ENCODE measurements at regions of chr20 and their contacts with region 1.

Region 1: GRCh38 chr20:62616728-62617621 is 25.3 kb upstream of the SLCO4A1 start:
- DNase-seq: peak; percentile 73
- ATAC-seq: peak; percentile 61
- H3K4me3 Mint-ChIP-seq: peak overlapping the region; percentile 73
- H3K27ac Mint-ChIP-seq: peak overlapping the region; percentile 93
- H3K4me1 Mint-ChIP-seq: peaks cover 45% of the 10 kb centered on the region
- H3K27me3 Mint-ChIP-seq: no peaks in the 10 kb centered on the region
- CTCF ChIP-seq: peak; percentile 84

Region 2: DNA sequence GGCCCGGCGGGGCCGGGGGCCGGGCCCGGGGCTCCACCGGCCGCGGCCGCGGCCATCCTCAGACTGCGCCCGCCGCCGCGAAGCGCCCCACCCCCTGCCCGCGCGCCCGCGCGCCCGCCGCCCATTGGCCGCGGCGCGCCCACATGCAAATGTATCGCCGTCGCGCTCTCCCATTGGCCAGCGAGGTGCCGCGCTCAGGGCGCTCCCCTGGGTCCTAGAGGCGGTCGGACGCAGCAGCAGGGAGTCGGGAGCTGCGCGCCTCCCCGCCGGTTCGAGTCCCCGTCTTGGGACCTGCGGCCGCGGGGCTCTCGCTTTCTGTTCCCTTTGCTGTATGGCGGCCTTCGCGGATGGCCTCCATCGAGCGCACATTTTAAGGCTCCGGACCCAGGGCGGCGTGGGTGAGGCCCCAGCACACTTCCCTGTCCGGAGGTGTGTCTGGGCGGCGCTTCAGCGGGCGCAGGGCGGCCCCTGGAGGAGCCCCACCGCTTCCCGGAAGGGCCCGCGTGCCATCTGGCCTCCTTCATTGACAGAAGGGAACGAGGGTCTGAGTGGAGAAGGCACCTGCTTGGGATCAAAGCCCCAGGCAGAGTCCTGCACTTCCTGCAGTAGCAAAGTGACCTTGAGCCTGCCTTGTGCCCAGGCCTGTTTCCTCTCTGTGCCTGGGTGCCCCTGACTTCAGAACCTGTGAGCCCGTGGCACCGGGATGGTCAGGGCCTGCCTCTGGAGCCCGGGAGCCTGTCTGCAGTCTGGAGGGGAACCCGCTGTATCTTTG is 209.6 kb before region 1 on chr20 and contains the start of gene CABLES2:
- CTCF ChIA-PET with region 1: interaction called, 11 read pairs
- POLR2A ChIA-PET with region 1: no interaction called
- intact Hi-C with region 1: loop called (anchors 2 kb)
- DNase-seq: peak; percentile 90
- ATAC-seq: peak; percentile 90
- H3K4me3 Mint-ChIP-seq: peak within 1 kb of the TSS; percentile 88
- H3K27ac Mint-ChIP-seq: peak within 1 kb of the TSS; percentile 86
- H3K4me1 Mint-ChIP-seq: peaks cover 36% of the 10 kb centered on the region
- H3K27me3 Mint-ChIP-seq: no peaks in the 10 kb centered on the region
- CTCF ChIP-seq: no peak
- total RNA-seq, gene CABLES2: 6.6 and 7.0 TPM in 2 replicates

Region 3: DNA sequence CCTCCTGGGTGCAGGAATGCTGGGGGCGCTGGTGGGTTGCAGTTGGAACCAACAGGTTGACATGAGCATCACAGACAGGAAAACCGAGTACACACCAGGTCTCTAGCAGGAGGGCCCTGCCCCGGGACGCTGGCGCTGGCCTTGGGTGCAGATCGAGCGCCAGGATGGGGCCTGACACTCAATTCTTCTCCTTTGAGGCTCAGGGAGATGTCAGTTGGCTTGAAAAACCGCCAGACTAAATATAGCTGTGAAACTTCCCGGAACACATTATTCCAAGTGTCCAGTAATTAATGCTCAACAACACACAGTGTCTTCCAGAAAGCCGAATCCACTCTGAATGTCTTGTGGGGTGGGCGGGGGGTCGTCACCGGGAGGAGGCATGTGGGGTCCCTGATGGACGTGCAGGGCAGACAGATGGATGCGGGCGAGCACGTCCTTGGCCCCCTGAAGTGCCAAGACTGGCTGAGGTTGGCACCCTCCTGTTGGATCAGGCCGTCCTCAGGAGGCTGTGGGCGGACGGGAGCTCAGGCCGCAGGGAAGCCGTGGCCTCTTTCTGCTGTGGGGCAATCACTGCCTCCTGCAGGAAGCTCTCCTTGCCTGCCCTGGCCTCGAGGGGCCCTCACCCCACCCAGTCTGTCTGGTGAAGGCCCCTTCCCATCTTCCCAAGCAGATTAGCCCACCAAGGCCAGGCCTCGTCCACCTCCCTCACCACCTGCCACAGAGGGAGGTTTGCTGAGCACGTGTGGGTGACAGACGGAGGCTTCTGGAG is 121.8 kb before region 1 on chr20:
- CTCF ChIA-PET with region 1: interaction called, 42 read pairs
- POLR2A ChIA-PET with region 1: interaction called, 11 read pairs
- intact Hi-C with region 1: loop called (anchors 1 kb)
- DNase-seq: no peak
- ATAC-seq: no peak
- H3K4me3 Mint-ChIP-seq: peak overlapping the region; percentile 44
- H3K27ac Mint-ChIP-seq: peak overlapping the region; percentile 59
- H3K4me1 Mint-ChIP-seq: peaks cover 24% of the 10 kb centered on the region
- H3K27me3 Mint-ChIP-seq: peaks cover 9% of the 10 kb centered on the region
- CTCF ChIP-seq: no peak

Region 4: GRCh38 chr20:62500237-62500864 is 116.6 kb before region 1 on chr20:
- CTCF ChIA-PET with region 1: interaction called, 42 read pairs
- POLR2A ChIA-PET with region 1: interaction called, 11 read pairs
- intact Hi-C with region 1: loop called (anchors 1 kb)
- DNase-seq: peak; percentile 77
- ATAC-seq: peak; percentile 49
- H3K4me3 Mint-ChIP-seq: no peak overlapping the region
- H3K27ac Mint-ChIP-seq: peak overlapping the region; percentile 67
- H3K4me1 Mint-ChIP-seq: peaks cover 42% of the 10 kb centered on the region
- H3K27me3 Mint-ChIP-seq: no peaks in the 10 kb centered on the region
- CTCF ChIP-seq: peak; percentile 33

Region 5: DNA sequence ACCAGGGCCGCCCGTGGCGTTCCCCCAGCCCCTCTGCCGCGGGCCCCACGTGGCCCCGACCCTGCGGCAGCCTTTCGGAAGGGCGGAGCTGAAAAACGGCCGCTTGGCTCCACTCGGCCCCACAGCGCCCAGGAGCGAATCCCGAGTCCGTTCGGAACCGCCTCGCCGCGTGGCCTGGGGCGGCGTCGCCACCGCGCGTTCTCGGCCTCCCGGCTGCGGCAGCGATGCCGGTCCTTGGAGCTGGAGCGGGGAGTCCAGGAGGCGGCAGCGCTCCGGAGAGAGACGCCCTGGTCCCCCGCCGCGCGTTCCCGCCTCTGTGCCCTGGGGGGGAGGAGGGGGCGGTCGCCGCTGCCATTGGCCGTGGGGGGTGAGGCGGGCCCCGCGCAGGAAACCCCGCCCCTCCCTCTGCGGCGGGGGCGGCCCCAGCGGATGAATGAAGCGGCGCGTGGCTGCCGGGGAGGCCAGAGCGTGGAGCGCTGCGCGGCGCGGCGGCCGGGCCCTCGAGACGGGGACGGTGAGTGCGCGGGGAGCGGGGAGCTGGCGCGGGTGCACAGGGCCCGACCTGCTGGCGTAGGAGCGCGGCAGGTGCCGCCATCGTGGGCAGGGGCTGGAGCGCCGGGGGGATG is 25.2 kb after region 1 on chr20 and contains the start of gene SLCO4A1:
- CTCF ChIA-PET with region 1: interaction called, 22 read pairs
- POLR2A ChIA-PET with region 1: interaction called, 147 read pairs
- intact Hi-C with region 1: no loop called
- DNase-seq: peak; percentile 90
- ATAC-seq: peak; percentile 91
- H3K4me3 Mint-ChIP-seq: peak within 1 kb of the TSS; percentile 87
- H3K27ac Mint-ChIP-seq: peak within 1 kb of the TSS; percentile 72
- H3K4me1 Mint-ChIP-seq: peaks cover 41% of the 10 kb centered on the region
- H3K27me3 Mint-ChIP-seq: no peaks in the 10 kb centered on the region
- CTCF ChIP-seq: no peak
- total RNA-seq, gene SLCO4A1: 27.8 and 38.9 TPM in 2 replicates

Region 6: DNA sequence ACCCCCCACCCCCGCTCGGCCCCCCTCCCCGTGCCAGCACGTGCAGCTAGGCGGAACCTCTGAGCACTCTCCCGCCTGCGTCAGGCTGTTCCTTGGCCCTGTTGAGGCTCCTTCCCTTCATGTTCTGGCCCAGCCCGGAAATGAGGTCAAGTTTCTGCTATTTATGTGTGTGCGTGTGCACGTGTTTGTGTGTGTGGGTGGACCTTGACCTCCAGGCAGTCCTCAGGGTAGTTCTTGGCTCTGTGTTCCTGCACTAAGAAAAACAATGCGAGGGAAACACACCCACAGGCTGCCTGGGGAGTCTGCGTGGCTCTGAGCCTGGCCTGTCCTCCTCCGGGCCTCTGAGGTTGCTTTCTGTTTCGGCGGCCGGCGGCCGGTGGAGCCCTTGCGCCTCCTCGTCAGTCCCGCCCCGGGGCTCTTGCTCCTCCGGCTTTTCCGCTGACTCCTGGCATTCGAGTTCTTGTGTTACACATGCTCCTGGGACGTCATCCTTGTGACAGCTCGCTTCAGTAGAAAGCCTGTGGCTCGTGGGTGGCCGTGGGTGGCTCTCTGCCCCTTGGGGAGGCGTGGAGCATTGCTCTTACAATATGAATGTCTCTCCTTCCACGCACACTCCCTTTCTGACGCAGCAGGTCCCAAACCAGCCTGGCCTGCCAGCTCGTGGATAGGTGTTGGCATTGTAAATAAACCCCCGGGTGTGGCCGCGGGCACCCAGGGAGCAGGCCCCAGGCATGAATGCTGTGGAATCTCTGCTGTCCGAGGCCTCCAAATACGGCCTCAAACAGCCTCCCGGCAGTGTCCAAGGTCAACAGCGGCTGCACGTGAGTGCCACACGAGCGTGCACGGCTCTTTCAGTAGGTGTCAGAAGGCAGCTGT is 35.3 kb after region 1 on chr20:
- CTCF ChIA-PET with region 1: interaction called, 9 read pairs
- POLR2A ChIA-PET with region 1: interaction called, 49 read pairs
- intact Hi-C with region 1: loop called (anchors 1 kb)
- DNase-seq: peak; percentile 55
- ATAC-seq: peak; percentile 55
- H3K4me3 Mint-ChIP-seq: peak overlapping the region; percentile 82
- H3K27ac Mint-ChIP-seq: peak overlapping the region; percentile 94
- H3K4me1 Mint-ChIP-seq: peaks cover 63% of the 10 kb centered on the region
- H3K27me3 Mint-ChIP-seq: no peaks in the 10 kb centered on the region
- CTCF ChIP-seq: no peak